Activated B cell treated with CpG ODN at 0.5 μM for 24 hours (primary cell): ENCODE measurements at regions of chr3 and their contacts with region 1.

Region 1: GRCh38 chr3:111691293-111691909 is 96.3 kb upstream of the ZBED2 start:
- DNase-seq: no peak
- ATAC-seq: peak; percentile 45
- H3K4me3 Mint-ChIP-seq: no peak overlapping the region
- H3K27ac Mint-ChIP-seq: no peak overlapping the region
- H3K4me1 Mint-ChIP-seq: peaks cover 34% of the 10 kb centered on the region
- H3K27me3 Mint-ChIP-seq: no peaks in the 10 kb centered on the region
- CTCF ChIP-seq: no peak

Region 2: GRCh38 chr3:111096487-111097209 is 594.8 kb before region 1 on chr3:
- CTCF ChIA-PET with region 1: no interaction called
- POLR2A ChIA-PET with region 1: no interaction called
- intact Hi-C with region 1: no loop called
- DNase-seq: no peak
- ATAC-seq: no peak
- H3K4me3 Mint-ChIP-seq: no peak overlapping the region
- H3K27ac Mint-ChIP-seq: no peak overlapping the region
- H3K4me1 Mint-ChIP-seq: no peaks in the 10 kb centered on the region
- H3K27me3 Mint-ChIP-seq: peaks cover 7% of the 10 kb centered on the region
- CTCF ChIP-seq: no peak

Region 3: DNA sequence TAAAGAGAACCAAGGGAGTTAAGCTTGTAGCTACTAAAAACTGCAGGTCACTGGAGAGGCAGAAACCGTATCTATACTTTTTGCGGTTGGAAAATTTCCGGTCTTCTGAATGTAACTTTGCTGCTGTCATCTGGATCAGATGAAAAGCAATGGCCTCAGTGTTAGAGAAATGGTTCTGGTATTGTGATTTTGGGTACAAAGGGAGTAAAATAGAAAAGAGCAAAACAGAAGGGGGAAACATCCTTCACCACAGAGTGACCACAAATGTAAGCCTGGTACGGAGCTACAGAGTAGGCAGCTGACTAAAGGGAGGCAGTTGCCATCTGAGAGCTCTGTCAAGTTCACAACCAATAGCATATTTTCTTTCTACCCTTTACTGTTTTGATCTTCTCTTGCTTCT is 143.8 kb before region 1 on chr3:
- CTCF ChIA-PET with region 1: no interaction called
- POLR2A ChIA-PET with region 1: interaction called, 13 read pairs
- intact Hi-C with region 1: no loop called
- DNase-seq: no peak
- ATAC-seq: peak; percentile 68
- H3K4me3 Mint-ChIP-seq: no peak overlapping the region
- H3K27ac Mint-ChIP-seq: no peak overlapping the region
- H3K4me1 Mint-ChIP-seq: peaks cover 13% of the 10 kb centered on the region
- H3K27me3 Mint-ChIP-seq: no peaks in the 10 kb centered on the region
- CTCF ChIP-seq: no peak

Region 4: GRCh38 chr3:111662012-111662411 is 29.4 kb before region 1 on chr3:
- CTCF ChIA-PET with region 1: no interaction called
- POLR2A ChIA-PET with region 1: no interaction called
- intact Hi-C with region 1: no loop called
- DNase-seq: no peak
- ATAC-seq: no peak
- H3K4me3 Mint-ChIP-seq: no peak overlapping the region
- H3K27ac Mint-ChIP-seq: no peak overlapping the region
- H3K4me1 Mint-ChIP-seq: peaks cover 13% of the 10 kb centered on the region
- H3K27me3 Mint-ChIP-seq: no peaks in the 10 kb centered on the region
- CTCF ChIP-seq: no peak

Region 5: GRCh38 chr3:111751961-111752360 is 60.6 kb after region 1 on chr3:
- CTCF ChIA-PET with region 1: no interaction called
- POLR2A ChIA-PET with region 1: no interaction called
- intact Hi-C with region 1: no loop called
- DNase-seq: no peak
- ATAC-seq: no peak
- H3K4me3 Mint-ChIP-seq: no peak overlapping the region
- H3K27ac Mint-ChIP-seq: no peak overlapping the region
- H3K4me1 Mint-ChIP-seq: no peaks in the 10 kb centered on the region
- H3K27me3 Mint-ChIP-seq: no peaks in the 10 kb centered on the region
- CTCF ChIP-seq: no peak

Region 6: GRCh38 chr3:111967651-111968274 is 276.4 kb after region 1 on chr3:
- CTCF ChIA-PET with region 1: interaction called, 14 read pairs
- POLR2A ChIA-PET with region 1: no interaction called
- intact Hi-C with region 1: no loop called
- DNase-seq: peak; percentile 39
- ATAC-seq: peak; percentile 90
- H3K4me3 Mint-ChIP-seq: peak overlapping the region; percentile 4
- H3K27ac Mint-ChIP-seq: no peak overlapping the region
- H3K4me1 Mint-ChIP-seq: peaks cover 5% of the 10 kb centered on the region
- H3K27me3 Mint-ChIP-seq: no peaks in the 10 kb centered on the region
- CTCF ChIP-seq: peak; percentile 97

Region 7: DNA sequence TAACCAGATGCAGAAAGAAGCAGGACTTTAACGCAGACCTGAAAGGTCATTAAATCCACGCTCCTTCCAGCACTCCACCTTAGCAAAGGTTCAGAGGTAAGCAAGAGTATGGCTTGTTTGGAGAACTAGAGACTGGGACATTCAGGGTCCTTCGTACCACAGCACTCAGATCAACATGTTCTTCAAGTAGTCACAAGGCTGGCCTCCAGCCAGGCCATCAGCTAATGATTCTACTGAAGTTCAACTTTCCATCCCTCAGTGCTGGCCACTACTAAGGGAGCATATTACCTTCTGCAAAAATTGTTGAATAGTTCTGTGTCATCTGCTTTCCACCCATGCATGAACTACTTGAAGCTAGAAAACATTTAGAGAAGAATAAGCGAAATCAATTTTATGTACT is 1137.6 kb after region 1 on chr3:
- CTCF ChIA-PET with region 1: no interaction called
- POLR2A ChIA-PET with region 1: no interaction called
- intact Hi-C with region 1: no loop called
- DNase-seq: no peak
- ATAC-seq: no peak
- H3K4me3 Mint-ChIP-seq: no peak overlapping the region
- H3K27ac Mint-ChIP-seq: no peak overlapping the region
- H3K4me1 Mint-ChIP-seq: peaks cover 2% of the 10 kb centered on the region
- H3K27me3 Mint-ChIP-seq: no peaks in the 10 kb centered on the region
- CTCF ChIP-seq: no peak